Upper lobe of right lung (tissue), 1 donor: ENCODE measurements at regions of chr12 and their contacts with region 1.

Region 1: GRCh38 chr12:120421701-120422100 is 16.2 kb upstream of the COX6A1 start:
- DNase-seq: no peak
- ATAC-seq: no peak
- H3K4me3 ChIP-seq: no peak overlapping the region
- H3K27ac ChIP-seq: no peak overlapping the region
- H3K4me1 ChIP-seq: no peaks in the 10 kb centered on the region
- H3K27me3 ChIP-seq: no peaks in the 10 kb centered on the region
- CTCF ChIP-seq: no peak

Region 2: DNA sequence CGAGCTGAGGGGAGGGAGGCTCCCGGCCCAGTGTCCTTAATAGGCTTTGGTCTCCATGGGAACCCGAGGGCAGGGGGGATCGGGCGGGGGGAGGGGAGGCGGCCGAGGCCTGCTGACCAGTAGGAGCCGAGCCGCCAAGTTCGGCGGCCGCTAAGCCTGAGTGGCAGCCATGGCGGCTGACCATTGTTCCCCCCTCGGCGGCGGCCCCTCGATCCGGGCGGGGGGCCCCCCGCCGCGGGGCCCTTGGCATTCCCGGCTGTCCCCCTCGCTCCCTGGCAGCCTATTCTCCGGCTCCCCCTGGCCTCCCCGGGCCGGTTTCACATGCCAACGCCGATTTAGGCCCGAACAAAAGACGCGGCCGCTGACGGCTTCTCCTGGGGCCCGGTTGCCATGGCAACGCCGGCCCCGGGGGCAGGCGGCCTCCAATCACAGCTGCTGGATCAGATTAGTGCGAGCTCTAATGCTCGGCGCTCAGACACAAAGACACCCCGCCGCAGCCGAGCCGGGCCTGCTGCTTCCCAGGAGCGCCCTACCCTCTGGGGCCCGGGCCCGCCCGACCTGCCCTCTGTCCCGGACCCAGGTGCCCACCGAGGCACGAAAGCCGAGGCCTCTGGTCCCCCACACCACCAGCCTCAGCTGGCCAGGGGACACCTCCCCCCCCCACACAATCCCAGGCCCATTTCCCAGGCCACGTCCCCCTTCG is 60.0 kb before region 1 on chr12:
- intact Hi-C with region 1: loop called (anchors 10 kb)
- DNase-seq: no peak
- ATAC-seq: no peak
- H3K4me3 ChIP-seq: peak overlapping the region; percentile 28
- H3K27ac ChIP-seq: no peak overlapping the region
- H3K4me1 ChIP-seq: no peaks in the 10 kb centered on the region
- H3K27me3 ChIP-seq: peaks cover 16% of the 10 kb centered on the region
- CTCF ChIP-seq: no peak

Region 3: DNA sequence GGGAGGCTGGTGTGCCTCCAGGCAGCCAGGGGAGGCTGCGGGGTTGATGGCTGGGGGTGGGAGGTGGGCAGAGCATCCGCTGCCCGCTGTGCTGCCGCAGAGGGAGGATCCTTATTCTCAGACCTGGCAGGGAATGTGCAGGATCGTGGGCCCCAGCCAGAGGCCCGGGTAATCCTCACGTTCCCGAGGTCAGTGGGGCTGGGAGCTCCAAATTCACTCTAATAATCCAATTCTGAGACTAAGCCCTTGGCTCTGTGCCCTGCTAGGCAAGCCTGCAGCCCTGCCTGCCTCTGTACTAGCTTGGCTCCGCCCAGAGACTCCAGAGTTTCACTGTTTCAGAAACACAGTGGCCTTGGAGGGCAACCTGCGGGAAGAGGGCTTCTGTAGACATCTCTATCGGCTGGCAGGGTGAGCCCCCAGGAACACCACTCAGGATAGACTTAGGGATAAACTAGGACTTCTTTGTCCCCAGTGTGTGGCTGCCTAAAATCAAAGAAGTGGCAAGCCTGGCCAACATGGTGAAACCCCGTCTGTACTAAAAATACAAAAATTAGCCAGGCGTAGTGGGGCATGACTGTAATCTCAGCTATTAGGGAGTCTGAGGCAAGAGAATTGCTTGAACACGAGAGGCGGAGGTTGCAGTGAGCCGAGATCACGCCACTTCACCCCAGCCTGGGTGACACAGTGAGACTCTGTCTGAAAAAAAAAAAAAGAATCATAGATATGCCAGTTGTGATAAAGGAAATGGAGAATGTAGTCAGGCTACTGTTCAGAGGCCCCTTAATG is 247.5 kb after region 1 on chr12:
- intact Hi-C with region 1: no loop called
- DNase-seq: no peak
- ATAC-seq: peak; percentile 67
- H3K4me3 ChIP-seq: no peak overlapping the region
- H3K27ac ChIP-seq: peak overlapping the region; percentile 24
- H3K4me1 ChIP-seq: no peaks in the 10 kb centered on the region
- H3K27me3 ChIP-seq: no peaks in the 10 kb centered on the region
- CTCF ChIP-seq: no peak